ENCODE measurements at regions of chr6 and their contacts with region 1.

Region 1: GRCh38 chr6:44489910-44490604 is 102.6 kb downstream of the CDC5L start:
- DNase-seq: peak in 3 of 6 donors; percentile 42 to 69 (median 61)
- ATAC-seq: peak; percentile 87 to 96 (median 92)
- H3K4me3 ChIP-seq: no peak overlapping the region
- H3K27ac ChIP-seq: peak overlapping the region in 3 of 4 donors; percentile 36 to 93 (median 87)
- H3K4me1 ChIP-seq: peaks cover 0 to 11% (median 0%) of the 10 kb centered on the region in 3 donors
- H3K27me3 ChIP-seq: no peaks in the 10 kb centered on the region
- CTCF ChIP-seq: no peak

Region 2: DNA sequence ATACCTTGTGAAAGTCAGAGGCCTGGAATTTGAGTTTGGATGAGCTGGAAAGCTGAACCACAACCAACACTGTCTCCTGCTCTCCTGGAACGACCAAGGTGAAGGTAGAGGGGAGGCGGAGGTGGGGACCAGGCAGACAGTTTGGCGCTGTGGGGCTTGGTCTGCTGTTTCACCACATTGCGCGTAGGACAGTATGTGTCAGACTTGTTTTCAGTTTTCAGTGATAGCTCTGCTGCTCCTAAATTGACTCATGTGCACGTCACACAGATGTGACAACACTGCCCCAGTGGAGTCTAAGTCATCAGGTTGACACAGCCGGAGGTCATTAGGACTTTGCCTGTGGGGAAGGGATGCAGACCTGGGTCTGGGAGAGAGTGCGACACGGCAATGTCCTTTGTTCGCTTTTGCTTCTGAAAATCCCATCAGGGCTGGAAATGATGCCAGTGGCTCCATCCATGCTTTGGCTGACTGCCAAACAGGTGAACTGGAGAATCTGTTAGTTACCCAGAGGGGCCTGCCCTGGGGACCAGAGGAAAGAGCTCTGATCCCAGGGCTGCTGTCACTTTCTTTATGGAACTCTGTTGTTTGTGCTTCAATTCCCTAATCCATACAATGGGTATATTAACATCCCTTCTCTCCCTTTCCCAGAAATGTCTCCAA is 152.9 kb after region 1 on chr6:
- intact Hi-C with region 1: loop called in 1 of 3 experiments (anchors 10 kb)
- DNase-seq: no peak
- ATAC-seq: no peak
- H3K4me3 ChIP-seq: no peak overlapping the region
- H3K27ac ChIP-seq: no peak overlapping the region
- H3K4me1 ChIP-seq: no peaks in the 10 kb centered on the region
- H3K27me3 ChIP-seq: no peaks in the 10 kb centered on the region
- CTCF ChIP-seq: no peak

Measured in pancreas (tissue), 10 donors.